Dendritic cell treated with granulocyte-macrophage colony-stimulating factor and Interleukin-4, amounts not matched to agents 40 ng/mL and 50 ng/mL, for 4 days (primary cell): ENCODE measurements at regions of chr4 and their contacts with region 1.

Region 1: GRCh38 chr4:10063544-10064300 is 42.4 kb upstream of the SLC2A9 start:
- H3K4me3 Mint-ChIP-seq: no peak overlapping the region
- H3K27ac Mint-ChIP-seq: peak overlapping the region; percentile 78
- H3K4me1 Mint-ChIP-seq: peaks cover 28% of the 10 kb centered on the region
- H3K27me3 Mint-ChIP-seq: no peaks in the 10 kb centered on the region

Region 2: DNA sequence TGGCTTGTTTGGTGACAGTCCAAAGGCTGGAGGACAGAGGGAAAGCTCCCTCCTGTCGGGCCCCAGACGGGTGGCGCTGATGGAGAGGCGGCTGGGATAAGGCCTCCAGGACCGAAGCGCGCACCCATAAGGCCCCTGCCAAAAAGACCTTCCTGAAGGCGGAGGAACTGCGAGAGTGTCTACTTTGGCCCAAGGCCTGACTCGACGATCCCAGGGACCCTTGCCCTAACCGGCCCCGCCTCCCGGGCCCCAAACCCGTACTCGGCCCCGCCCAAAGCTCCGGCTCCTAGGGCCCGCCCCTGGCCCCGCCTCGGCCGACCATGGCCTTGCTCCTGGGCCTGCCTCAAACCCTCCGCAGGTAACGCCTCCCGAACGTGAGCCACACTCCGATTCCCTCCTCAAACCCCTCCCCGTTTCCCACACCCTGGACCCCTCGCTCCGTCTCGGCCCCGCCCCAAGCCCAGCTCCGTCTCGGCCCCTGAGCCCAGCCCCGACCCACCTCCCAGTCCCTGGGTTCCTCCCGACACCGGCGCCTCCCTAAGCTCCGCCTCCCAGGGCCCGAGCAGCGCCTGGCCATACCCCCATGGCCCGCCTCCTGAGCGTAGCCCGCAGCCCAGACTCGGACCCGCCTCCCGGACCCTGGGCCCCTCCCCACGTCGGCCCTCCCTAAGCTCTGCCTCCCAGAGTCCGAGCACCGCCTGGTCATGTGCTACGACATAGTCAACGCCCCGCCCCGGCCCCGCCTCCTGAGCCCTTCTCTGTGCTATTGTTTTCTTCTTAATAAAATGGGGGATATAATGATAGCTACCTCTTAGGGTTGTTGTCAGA is 372.3 kb before region 1 on chr4:
- intact Hi-C with region 1: loop called (anchors 10 kb)
- H3K4me3 Mint-ChIP-seq: peak overlapping the region; percentile 81
- H3K27ac Mint-ChIP-seq: peak overlapping the region; percentile 85
- H3K4me1 Mint-ChIP-seq: peaks cover 12% of the 10 kb centered on the region
- H3K27me3 Mint-ChIP-seq: peaks cover 19% of the 10 kb centered on the region

Region 3: DNA sequence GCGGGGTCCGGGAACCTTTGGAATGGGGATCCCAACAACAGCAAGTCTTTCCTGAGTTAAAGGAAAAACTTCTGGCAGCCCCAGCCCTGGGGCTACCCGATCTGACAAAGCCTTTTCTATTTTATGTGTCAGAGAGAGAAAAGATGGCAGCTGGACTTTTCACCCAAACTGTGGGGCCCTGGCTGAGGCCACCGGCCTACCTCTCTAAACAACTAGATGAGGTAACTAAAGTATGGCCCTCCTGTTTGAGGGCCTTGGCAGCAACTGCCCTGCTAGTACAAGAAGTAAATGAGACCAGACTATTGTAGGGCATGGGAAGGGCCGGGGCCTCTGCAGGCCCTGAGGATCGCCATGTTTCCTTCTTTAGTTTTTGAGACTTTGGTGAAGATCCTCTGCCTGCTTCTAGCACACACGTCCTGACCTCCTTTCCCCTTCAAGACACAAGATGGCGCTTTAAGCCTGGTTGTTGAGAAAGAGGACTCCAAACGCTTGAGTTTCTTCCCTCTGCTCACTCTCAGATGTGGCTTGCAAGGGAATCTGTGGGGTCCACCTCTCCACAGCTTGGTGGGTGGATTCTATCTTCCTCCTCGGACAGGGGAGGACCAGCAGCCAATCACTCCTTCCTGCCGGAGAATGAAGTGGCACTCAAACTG is 300.8 kb before region 1 on chr4:
- intact Hi-C with region 1: loop called (anchors 1 kb)
- H3K4me3 Mint-ChIP-seq: no peak overlapping the region
- H3K27ac Mint-ChIP-seq: no peak overlapping the region
- H3K4me1 Mint-ChIP-seq: peaks cover 5% of the 10 kb centered on the region
- H3K27me3 Mint-ChIP-seq: peaks cover 24% of the 10 kb centered on the region

Region 4: DNA sequence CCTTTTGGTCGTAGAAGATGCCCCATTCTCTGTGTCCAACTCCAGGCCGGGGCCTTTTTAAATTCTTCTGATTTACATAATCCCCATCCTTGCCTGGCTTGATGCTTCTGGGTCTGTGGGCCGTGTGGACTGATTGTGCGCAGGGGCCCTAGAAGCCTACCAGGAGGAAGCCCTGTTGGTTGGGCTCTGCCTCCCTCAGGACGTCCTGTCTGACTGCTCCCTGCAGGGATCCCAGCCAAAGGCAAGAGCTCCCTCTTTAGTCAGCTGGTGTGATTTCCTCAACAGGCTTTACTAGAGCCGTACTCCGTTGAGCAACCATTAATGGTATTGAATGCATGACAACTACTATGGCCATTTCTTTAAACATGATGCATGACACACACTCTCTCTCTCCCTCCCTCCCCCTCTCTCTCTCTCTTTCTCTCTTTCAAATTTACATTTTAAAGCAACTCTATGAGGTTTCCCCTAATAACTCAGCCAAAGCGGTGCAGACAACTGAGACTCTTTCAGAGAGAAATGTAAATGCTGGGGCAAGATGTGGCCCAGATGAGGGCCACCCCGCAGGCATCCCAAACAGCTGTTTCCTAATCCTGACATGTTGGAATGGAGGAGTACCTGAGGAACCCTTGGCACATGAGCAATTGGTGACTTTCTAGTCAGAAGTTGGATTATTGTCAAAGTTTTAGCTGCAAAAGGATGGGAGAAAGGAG is 165.0 kb before region 1 on chr4:
- intact Hi-C with region 1: loop called (anchors 5 kb)
- H3K4me3 Mint-ChIP-seq: no peak overlapping the region
- H3K27ac Mint-ChIP-seq: no peak overlapping the region
- H3K4me1 Mint-ChIP-seq: peaks cover 31% of the 10 kb centered on the region
- H3K27me3 Mint-ChIP-seq: no peaks in the 10 kb centered on the region